Activated naive CD8-positive, alpha-beta T cell treated with anti-CD3 and anti-CD28 coated beads, Interleukin-2, amount 10 ng/mL, durations not matched to agents 7 days and 5 days (primary cell): ENCODE measurements at regions of chr3 and their contacts with region 1.

Region 1: DNA sequence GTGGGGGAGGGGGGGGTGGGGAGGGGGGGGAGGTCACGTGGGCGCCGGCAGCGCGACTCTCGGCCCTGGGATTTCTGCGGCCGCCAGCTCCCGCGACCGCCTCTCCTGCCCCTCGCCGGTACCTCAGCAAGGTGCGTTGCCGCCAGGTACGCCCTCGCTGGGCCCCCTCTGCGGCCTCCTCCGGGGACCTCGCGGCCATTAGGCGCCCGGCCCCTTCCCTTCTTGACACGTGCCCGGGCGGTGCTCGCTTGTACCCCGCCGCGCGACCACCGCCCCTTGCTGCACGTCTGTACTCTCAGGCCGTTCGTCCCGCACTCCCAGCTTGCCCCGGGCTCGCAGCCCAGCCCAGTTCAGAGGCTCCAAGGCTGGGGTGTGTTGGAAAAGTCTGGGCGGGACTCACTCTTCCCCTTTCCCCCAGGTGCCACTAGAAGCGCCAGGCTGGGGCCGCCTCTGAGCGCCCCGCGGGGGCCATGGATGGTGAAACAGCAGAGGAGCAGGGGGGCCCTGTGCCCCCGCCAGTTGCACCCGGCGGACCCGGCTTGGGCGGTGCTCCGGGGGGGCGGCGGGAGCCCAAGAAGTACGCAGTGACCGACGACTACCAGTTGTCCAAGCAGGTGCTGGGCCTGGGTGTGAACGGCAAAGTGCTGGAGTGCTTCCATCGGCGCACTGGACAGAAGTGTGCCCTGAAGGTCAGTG is at the start of gene MAPKAPK3:
- DNase-seq: no peak
- ATAC-seq: peak; percentile 2
- H3K4me3 Mint-ChIP-seq: peak within 1 kb of the TSS; percentile 97
- H3K27ac Mint-ChIP-seq: peak within 1 kb of the TSS; percentile 95
- H3K4me1 Mint-ChIP-seq: peaks cover 61% of the 10 kb centered on the region
- H3K27me3 Mint-ChIP-seq: no peaks in the 10 kb centered on the region
- total RNA-seq, gene MAPKAPK3: 176 to 195 TPM

Region 2: DNA sequence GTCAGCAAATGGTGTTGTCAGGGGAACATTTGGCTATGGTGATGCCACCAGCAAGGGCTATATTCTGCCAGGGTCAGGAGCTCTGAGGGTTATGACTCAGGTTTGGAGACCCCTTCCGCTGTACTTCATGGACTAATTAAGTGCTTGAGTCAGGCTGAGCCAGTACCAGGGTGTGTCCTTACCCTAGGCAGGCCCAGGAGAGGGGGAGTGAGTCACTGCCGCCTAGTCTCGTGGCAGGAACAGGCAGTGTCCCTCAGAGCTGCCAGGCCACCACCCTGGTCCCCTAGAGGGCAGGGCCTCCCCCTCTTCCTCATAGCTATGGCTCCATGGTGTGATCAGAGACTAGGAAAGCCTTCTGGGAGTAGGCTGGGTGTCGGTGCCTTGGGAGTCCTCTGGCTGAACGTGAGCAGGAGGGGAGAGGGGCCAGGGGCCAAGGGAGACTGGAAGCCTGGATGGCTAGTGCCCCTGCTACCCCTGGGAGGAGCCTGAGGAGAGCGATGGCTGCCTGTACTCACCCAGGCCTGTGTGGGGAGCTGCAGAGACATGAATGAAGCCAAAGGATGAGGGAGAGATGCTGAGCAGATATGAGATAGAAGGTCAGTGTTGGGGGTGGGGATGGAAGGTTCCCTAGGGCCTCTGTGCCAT is 10.3 kb after region 1 on chr3:
- POLR2A ChIA-PET with region 1: interaction called, 896 read pairs
- DNase-seq: no peak
- ATAC-seq: peak; percentile 24
- H3K4me3 Mint-ChIP-seq: no peak overlapping the region
- H3K27ac Mint-ChIP-seq: peak overlapping the region; percentile 1
- H3K4me1 Mint-ChIP-seq: peaks cover 81% of the 10 kb centered on the region
- H3K27me3 Mint-ChIP-seq: no peaks in the 10 kb centered on the region

Region 3: GRCh38 chr3:50652709-50653108 is 35.5 kb after region 1 on chr3:
- POLR2A ChIA-PET with region 1: interaction called, 28 read pairs
- DNase-seq: peak; percentile 65
- ATAC-seq: peak; percentile 46
- H3K4me3 Mint-ChIP-seq: no peak overlapping the region
- H3K27ac Mint-ChIP-seq: peak overlapping the region; percentile 22
- H3K4me1 Mint-ChIP-seq: peaks cover 23% of the 10 kb centered on the region
- H3K27me3 Mint-ChIP-seq: no peaks in the 10 kb centered on the region